Posterior vena cava (tissue), 2 donors: ENCODE measurements at regions of chr10 and their contacts with region 1.

Region 1: GRCh38 chr10:75083972-75084833 is 27.3 kb upstream of the SAMD8 start:
- DNase-seq: no peak

Region 2: DNA sequence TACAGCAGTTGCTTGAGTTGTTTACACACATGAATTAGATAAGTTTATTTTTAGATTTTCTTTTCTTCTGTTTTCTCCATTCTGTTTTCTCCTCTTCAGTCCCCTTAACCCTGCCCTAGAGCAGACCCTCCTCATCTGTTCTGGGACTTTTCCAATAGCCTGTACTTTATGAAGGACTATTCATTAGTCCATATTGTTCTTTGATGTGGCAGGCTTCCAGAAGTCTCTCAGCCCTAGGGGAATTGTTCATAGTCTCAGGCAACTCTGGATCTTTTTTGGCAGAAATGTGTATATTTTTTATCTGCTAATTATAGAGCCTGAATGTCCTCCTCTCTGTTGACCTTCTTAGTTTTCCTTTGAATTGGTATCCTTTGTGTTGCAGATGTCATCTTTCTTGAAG is 232.4 kb before region 1 on chr10:
- intact Hi-C with region 1: no loop called
- DNase-seq: no peak

Region 3: GRCh38 chr10:75048669-75049098 is 35.5 kb before region 1 on chr10:
- intact Hi-C with region 1: no loop called
- DNase-seq: no peak

Region 4: GRCh38 chr10:75565286-75566251 is 481.4 kb after region 1 on chr10:
- intact Hi-C with region 1: loop called in 1 of 2 experiments (anchors 10 kb)
- DNase-seq: no peak